B cell (primary cell): ENCODE measurements at regions of chr1 and their contacts with region 1.

Region 1: DNA sequence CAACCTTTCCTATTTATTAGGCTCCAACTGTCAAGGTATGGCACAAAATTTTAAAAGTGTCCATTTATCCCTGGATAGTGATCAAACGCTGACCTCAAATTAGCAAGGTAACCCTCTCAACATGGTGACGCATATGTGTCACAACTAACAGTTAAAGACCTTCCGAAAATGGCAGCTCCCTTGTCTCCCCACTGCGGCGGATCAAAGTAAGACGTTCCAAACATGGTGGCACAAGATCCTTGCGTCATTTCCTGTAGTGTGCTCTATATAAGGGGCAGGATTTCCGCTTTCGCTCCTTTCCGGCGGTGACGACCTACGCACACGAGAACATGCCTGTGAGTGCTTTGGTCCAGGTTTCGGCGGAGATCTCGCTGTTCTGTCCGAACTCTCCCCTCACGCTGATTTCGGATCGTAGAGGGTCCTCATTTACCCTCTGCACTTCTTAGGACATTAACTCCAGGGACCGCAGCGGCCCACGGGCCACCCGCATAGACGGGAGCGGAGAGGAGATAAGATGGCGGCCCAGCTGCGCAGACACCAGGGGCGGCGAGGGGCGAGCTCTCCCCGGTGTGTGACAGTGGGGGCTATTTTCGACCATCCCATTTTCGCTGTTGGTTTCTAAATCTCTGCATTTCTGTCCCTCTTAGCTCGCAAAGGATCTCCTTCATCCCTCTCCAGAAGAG is at the start of gene RPS27:
- DNase-seq: peak; percentile 97
- ATAC-seq: peak; percentile 84
- H3K4me3 ChIP-seq: peak within 1 kb of the TSS; percentile 84 to 100 (median 94)
- H3K4me3 Mint-ChIP-seq: peak within 1 kb of the TSS; percentile 97
- H3K27ac ChIP-seq: peak within 1 kb of the TSS; percentile 93 to 96
- H3K27ac Mint-ChIP-seq: peak within 1 kb of the TSS; percentile 99
- H3K4me1 ChIP-seq: peaks cover 38 to 51% of the 10 kb centered on the region in 2 donors
- H3K4me1 Mint-ChIP-seq: peaks cover 41% of the 10 kb centered on the region
- H3K27me3 ChIP-seq: no peaks in the 10 kb centered on the region
- H3K27me3 Mint-ChIP-seq: no peaks in the 10 kb centered on the region
- CTCF ChIP-seq: no peak
- total RNA-seq, gene RPS27: 4,276 and 4,812 TPM in 2 replicates

Region 2: DNA sequence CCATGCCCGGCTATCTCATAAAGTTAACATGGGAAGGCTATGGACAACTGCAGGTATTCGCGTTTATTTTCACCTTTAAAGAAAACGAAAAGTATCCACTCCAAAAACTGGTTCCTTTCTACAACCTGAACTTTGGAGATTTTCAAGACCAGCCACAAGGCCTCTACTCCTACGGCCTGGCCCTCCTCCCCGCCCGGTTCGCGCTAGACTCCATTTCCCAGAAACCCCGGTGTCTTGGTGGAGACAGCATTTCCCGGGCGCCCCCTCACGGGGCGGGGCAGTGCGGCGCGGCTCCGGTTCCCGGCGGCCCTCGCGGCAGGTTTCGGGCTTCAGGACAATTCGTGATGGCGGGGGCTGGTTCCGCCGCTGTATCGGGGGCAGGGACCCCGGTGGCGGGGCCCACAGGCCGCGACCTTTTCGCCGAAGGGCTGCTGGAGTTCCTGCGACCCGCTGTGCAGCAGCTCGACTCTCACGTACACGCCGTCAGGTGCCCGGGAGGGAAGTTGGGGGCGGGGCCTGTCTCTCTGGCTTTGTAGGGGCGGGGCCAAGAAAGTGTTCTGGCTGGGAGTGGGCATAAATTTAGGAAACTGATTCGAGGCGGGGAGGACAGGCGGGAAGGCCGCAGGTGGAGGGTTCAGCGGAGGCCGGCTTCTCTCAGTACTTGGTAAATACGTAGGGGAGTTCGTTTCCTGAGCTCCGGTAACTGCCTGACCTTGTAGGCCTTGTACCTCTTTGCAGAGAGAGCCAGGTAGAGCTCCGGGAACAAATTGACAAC is 332.0 kb before region 1 on chr1 and contains the start of gene SNAPIN:
- CTCF ChIA-PET with region 1: no interaction called
- POLR2A ChIA-PET with region 1: interaction called, 4 read pairs
- intact Hi-C with region 1: loop called (anchors 5 kb)
- DNase-seq: peak; percentile 93
- ATAC-seq: peak; percentile 99
- H3K4me3 ChIP-seq: peak within 1 kb of the TSS; percentile 77 to 87 (median 82)
- H3K4me3 Mint-ChIP-seq: peak within 1 kb of the TSS; percentile 96
- H3K27ac ChIP-seq: peak within 1 kb of the TSS; percentile 68 to 83
- H3K27ac Mint-ChIP-seq: peak within 1 kb of the TSS; percentile 91
- H3K4me1 ChIP-seq: peaks cover 5 to 15% of the 10 kb centered on the region in 2 donors
- H3K4me1 Mint-ChIP-seq: peaks cover 12% of the 10 kb centered on the region
- H3K27me3 ChIP-seq: no peaks in the 10 kb centered on the region
- H3K27me3 Mint-ChIP-seq: no peaks in the 10 kb centered on the region
- CTCF ChIP-seq: no peak
- total RNA-seq, gene SNAPIN: 37.6 and 39.4 TPM in 2 replicates

Region 3: GRCh38 chr1:153749408-153750005 is 241.1 kb before region 1 on chr1:
- CTCF ChIA-PET with region 1: interaction called, 5 read pairs
- POLR2A ChIA-PET with region 1: no interaction called
- intact Hi-C with region 1: loop called (anchors 1 kb)
- DNase-seq: peak; percentile 86
- ATAC-seq: peak; percentile 100
- H3K4me3 ChIP-seq: no peak overlapping the region
- H3K4me3 Mint-ChIP-seq: no peak overlapping the region
- H3K27ac ChIP-seq: no peak overlapping the region
- H3K27ac Mint-ChIP-seq: no peak overlapping the region
- H3K4me1 ChIP-seq: peaks cover 0 to 5% of the 10 kb centered on the region in 2 donors
- H3K4me1 Mint-ChIP-seq: peaks cover 6% of the 10 kb centered on the region
- H3K27me3 ChIP-seq: no peaks in the 10 kb centered on the region
- H3K27me3 Mint-ChIP-seq: no peaks in the 10 kb centered on the region
- CTCF ChIP-seq: peak; percentile 91

Region 4: GRCh38 chr1:153805042-153805745 is 185.4 kb before region 1 on chr1:
- CTCF ChIA-PET with region 1: interaction called, 103 read pairs
- POLR2A ChIA-PET with region 1: interaction called, 8 read pairs
- intact Hi-C with region 1: no loop called
- DNase-seq: peak; percentile 91
- ATAC-seq: peak; percentile 98
- H3K4me3 ChIP-seq: no peak overlapping the region
- H3K4me3 Mint-ChIP-seq: peak overlapping the region; percentile 21
- H3K27ac ChIP-seq: peak overlapping the region; percentile 82 to 88
- H3K27ac Mint-ChIP-seq: peak overlapping the region; percentile 81
- H3K4me1 ChIP-seq: peaks cover 22 to 33% of the 10 kb centered on the region in 2 donors
- H3K4me1 Mint-ChIP-seq: peaks cover 30% of the 10 kb centered on the region
- H3K27me3 ChIP-seq: no peaks in the 10 kb centered on the region
- H3K27me3 Mint-ChIP-seq: no peaks in the 10 kb centered on the region
- CTCF ChIP-seq: no peak

Region 5: GRCh38 chr1:153946622-153947241 is 43.9 kb before region 1 on chr1 and contains the start of gene DENND4B:
- CTCF ChIA-PET with region 1: interaction called, 46 read pairs
- POLR2A ChIA-PET with region 1: interaction called, 38 read pairs
- intact Hi-C with region 1: loop called (anchors 1 kb)
- DNase-seq: peak; percentile 89
- ATAC-seq: peak; percentile 54
- H3K4me3 ChIP-seq: peak within 1 kb of the TSS; percentile 54 to 95 (median 85)
- H3K4me3 Mint-ChIP-seq: peak within 1 kb of the TSS; percentile 94
- H3K27ac ChIP-seq: peak within 1 kb of the TSS; percentile 91 to 98
- H3K27ac Mint-ChIP-seq: peak within 1 kb of the TSS; percentile 96
- H3K4me1 ChIP-seq: peaks cover 36 to 53% of the 10 kb centered on the region in 2 donors
- H3K4me1 Mint-ChIP-seq: peaks cover 56% of the 10 kb centered on the region
- H3K27me3 ChIP-seq: no peaks in the 10 kb centered on the region
- H3K27me3 Mint-ChIP-seq: no peaks in the 10 kb centered on the region
- CTCF ChIP-seq: peak; percentile 87
- total RNA-seq, gene DENND4B: 272 and 275 TPM in 2 replicates

Region 6: GRCh38 chr1:154183045-154183915 is 192.7 kb after region 1 on chr1:
- CTCF ChIA-PET with region 1: interaction called, 3 read pairs
- POLR2A ChIA-PET with region 1: interaction called, 8 read pairs
- intact Hi-C with region 1: loop called (anchors 5 kb)
- DNase-seq: peak; percentile 94
- ATAC-seq: peak; percentile 73
- H3K4me3 ChIP-seq: peak overlapping the region; percentile 54 to 99 (median 98)
- H3K4me3 Mint-ChIP-seq: peak overlapping the region; percentile 91
- H3K27ac ChIP-seq: peak overlapping the region; percentile 91 to 96
- H3K27ac Mint-ChIP-seq: peak overlapping the region; percentile 98
- H3K4me1 ChIP-seq: peaks cover 39 to 46% of the 10 kb centered on the region in 2 donors
- H3K4me1 Mint-ChIP-seq: peaks cover 48% of the 10 kb centered on the region
- H3K27me3 ChIP-seq: no peaks in the 10 kb centered on the region
- H3K27me3 Mint-ChIP-seq: peaks cover 4% of the 10 kb centered on the region
- CTCF ChIP-seq: no peak